AG04450 (cell line): ENCODE measurements at regions of chr5 and their contacts with region 1.

Region 1: DNA sequence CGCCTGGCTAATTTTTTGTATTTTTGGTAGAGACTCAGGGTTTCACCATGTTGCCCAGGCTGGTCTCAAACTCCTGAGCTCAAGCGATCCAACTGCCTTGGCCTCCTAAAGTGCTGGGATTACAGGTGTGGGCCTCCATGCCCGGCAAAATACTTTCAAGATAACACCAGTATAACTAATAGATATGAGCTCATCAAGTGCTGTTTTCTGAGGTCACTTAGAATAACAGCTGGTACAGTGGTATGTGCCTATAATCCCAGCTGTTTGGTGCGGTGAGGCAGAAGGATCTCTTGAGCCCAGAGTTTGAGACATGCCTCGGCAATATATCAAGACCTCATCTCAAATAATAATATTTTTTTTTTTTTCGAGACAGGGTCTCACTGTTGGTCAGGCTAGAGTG is 30.5 kb upstream of the CREBRF start:
- DNase-seq: no peak
- H3K4me3 ChIP-seq: no peak overlapping the region
- H3K27ac ChIP-seq: no peak overlapping the region
- H3K27me3 ChIP-seq: no peaks in the 10 kb centered on the region
- CTCF ChIP-seq: no peak

Region 2: GRCh38 chr5:172697123-172698121 is 328.2 kb before region 1 on chr5:
- CTCF ChIA-PET with region 1: no interaction called
- POLR2A ChIA-PET with region 1: no interaction called
- DNase-seq: peak; percentile 63
- H3K4me3 ChIP-seq: peak overlapping the region; percentile 72
- H3K27ac ChIP-seq: peak overlapping the region; percentile 21
- H3K27me3 ChIP-seq: peaks cover 24% of the 10 kb centered on the region
- CTCF ChIP-seq: peak; percentile 91

Region 3: GRCh38 chr5:173041881-173042762 is 16.5 kb after region 1 on chr5:
- CTCF ChIA-PET with region 1: no interaction called
- POLR2A ChIA-PET with region 1: interaction called, 10 read pairs
- DNase-seq: peak; percentile 73
- H3K4me3 ChIP-seq: no peak overlapping the region
- H3K27ac ChIP-seq: peak overlapping the region; percentile 84
- H3K27me3 ChIP-seq: no peaks in the 10 kb centered on the region
- CTCF ChIP-seq: no peak